Activated naive CD4-positive, alpha-beta T cell treated with anti-CD3 and anti-CD28 coated beads for 36 hours (primary cell): ENCODE measurements at regions of chr22 and their contacts with region 1.

Region 1: GRCh38 chr22:31290494-31291471 is 1.5 kb downstream of the PIK3IP1 start:
- DNase-seq: peak; percentile 96
- H3K4me3 Mint-ChIP-seq: peak overlapping the region; percentile 98
- H3K27ac Mint-ChIP-seq: peak overlapping the region; percentile 100
- H3K4me1 Mint-ChIP-seq: peaks cover 65% of the 10 kb centered on the region
- H3K27me3 Mint-ChIP-seq: no peaks in the 10 kb centered on the region

Region 2: GRCh38 chr22:30649430-30650007 is 641.3 kb before region 1 on chr22:
- CTCF ChIA-PET with region 1: no interaction called
- intact Hi-C with region 1: loop called (anchors 1 kb)
- DNase-seq: peak; percentile 95
- H3K4me3 Mint-ChIP-seq: no peak overlapping the region
- H3K27ac Mint-ChIP-seq: peak overlapping the region; percentile 75
- H3K4me1 Mint-ChIP-seq: peaks cover 28% of the 10 kb centered on the region
- H3K27me3 Mint-ChIP-seq: no peaks in the 10 kb centered on the region

Region 3: GRCh38 chr22:31107178-31107893 is 183.4 kb before region 1 on chr22 and contains the start of gene SELENOM:
- CTCF ChIA-PET with region 1: no interaction called
- intact Hi-C with region 1: loop called (anchors 1 kb)
- DNase-seq: peak; percentile 92
- H3K4me3 Mint-ChIP-seq: peak within 1 kb of the TSS; percentile 89
- H3K27ac Mint-ChIP-seq: peak within 1 kb of the TSS; percentile 76
- H3K4me1 Mint-ChIP-seq: peaks cover 19% of the 10 kb centered on the region
- H3K27me3 Mint-ChIP-seq: no peaks in the 10 kb centered on the region
- total RNA-seq, gene SELENOM: 9.3 to 11.0 TPM

Region 4: GRCh38 chr22:31272522-31273446 is 18.0 kb before region 1 on chr22:
- CTCF ChIA-PET with region 1: interaction called, 32 read pairs
- intact Hi-C with region 1: no loop called
- DNase-seq: peak; percentile 76
- H3K4me3 Mint-ChIP-seq: no peak overlapping the region
- H3K27ac Mint-ChIP-seq: no peak overlapping the region
- H3K4me1 Mint-ChIP-seq: peaks cover 58% of the 10 kb centered on the region
- H3K27me3 Mint-ChIP-seq: no peaks in the 10 kb centered on the region

Region 5: GRCh38 chr22:31308181-31308580 is 17.4 kb after region 1 on chr22:
- CTCF ChIA-PET with region 1: interaction called, 18 read pairs
- intact Hi-C with region 1: loop called (anchors 1 kb)
- DNase-seq: peak; percentile 24
- H3K4me3 Mint-ChIP-seq: no peak overlapping the region
- H3K27ac Mint-ChIP-seq: peak overlapping the region; percentile 82
- H3K4me1 Mint-ChIP-seq: peaks cover 45% of the 10 kb centered on the region
- H3K27me3 Mint-ChIP-seq: no peaks in the 10 kb centered on the region

Region 6: GRCh38 chr22:31489604-31490495 is 199.1 kb after region 1 on chr22 and contains the start of gene EIF4ENIF1:
- CTCF ChIA-PET with region 1: no interaction called
- intact Hi-C with region 1: loop called (anchors 5 kb)
- DNase-seq: peak; percentile 88
- H3K4me3 Mint-ChIP-seq: peak within 1 kb of the TSS; percentile 83
- H3K27ac Mint-ChIP-seq: peak within 1 kb of the TSS; percentile 97
- H3K4me1 Mint-ChIP-seq: peaks cover 50% of the 10 kb centered on the region
- H3K27me3 Mint-ChIP-seq: no peaks in the 10 kb centered on the region
- total RNA-seq, gene EIF4ENIF1: 28.1 to 29.0 TPM

Region 7: DNA sequence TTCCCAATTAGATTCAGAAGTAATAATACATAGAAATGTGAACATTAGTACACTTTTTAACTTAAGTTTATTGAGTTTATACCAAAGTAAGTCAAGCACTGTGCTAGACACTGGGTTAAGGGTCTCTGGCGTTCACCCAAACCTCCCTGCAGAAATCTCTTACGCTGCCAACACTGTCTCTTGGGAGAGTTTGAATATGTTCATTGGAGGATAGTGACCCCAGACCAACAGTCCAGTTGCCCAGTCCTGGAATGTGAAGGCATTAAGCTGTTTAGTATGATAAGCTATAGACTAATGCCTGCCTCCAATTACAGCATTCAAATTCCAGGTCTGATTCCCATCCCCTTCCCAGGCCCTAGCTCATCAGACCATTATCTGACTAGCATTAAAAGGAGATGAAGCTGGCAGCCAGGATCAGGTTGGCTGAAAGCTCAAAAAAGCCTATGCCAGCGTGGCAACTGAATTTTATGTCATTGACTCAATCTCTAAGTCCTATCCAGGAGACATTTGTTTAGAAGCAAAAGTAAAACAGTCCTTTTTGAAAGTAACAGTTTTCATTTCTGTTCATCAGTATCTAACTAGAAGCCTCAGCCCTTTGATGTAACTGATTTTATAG is 283.4 kb after region 1 on chr22:
- CTCF ChIA-PET with region 1: no interaction called
- intact Hi-C with region 1: no loop called
- DNase-seq: no peak
- H3K4me3 Mint-ChIP-seq: no peak overlapping the region
- H3K27ac Mint-ChIP-seq: no peak overlapping the region
- H3K4me1 Mint-ChIP-seq: peaks cover 5% of the 10 kb centered on the region
- H3K27me3 Mint-ChIP-seq: no peaks in the 10 kb centered on the region

Region 8: DNA sequence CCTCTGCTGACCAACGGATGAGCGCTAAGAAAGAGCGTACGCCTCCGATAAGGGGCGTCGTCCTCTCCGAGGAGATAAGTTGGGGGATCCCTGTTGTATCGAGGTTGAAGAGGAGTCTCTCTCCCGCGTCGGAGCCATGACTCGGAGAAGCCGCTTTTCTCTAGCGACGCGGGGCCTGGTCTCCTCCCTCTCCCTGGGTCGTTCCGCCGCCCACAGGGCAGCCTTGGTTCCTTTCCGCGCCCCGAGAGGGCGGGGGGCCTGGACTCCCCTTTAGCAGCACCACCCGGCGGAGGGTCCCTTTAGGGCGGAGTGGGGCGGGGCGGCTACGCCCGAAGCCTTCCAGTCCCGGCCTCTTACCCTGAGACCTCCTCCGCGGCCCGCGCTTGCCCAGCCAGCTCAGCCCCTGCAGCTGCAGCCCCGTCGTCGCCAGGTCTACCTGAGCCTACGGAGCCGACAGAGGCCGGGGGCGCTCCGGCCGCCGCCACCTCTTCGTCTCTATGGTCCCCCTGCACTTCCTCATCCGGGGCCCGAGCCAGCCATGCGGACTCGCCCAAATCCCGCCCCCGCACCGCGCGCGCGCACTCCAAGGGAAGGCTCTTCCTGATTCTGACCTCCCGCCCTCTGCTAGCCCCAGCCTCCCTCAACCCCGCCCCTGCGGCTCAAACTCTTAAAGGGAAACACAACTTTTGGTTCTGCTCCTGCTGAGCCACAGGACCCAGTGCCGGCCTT is 459.0 kb after region 1 on chr22 and contains the start of gene PRR14L:
- CTCF ChIA-PET with region 1: no interaction called
- intact Hi-C with region 1: loop called (anchors 5 kb)
- DNase-seq: peak; percentile 99
- H3K4me3 Mint-ChIP-seq: peak within 1 kb of the TSS; percentile 87
- H3K27ac Mint-ChIP-seq: peak within 1 kb of the TSS; percentile 93
- H3K4me1 Mint-ChIP-seq: peaks cover 55% of the 10 kb centered on the region
- H3K27me3 Mint-ChIP-seq: no peaks in the 10 kb centered on the region
- total RNA-seq, gene PRR14L: 28.7 to 31.8 TPM